HEK293 (cell line): ENCODE measurements at regions of chr6 and their contacts with region 1.

Region 1: GRCh38 chr6:154868143-154868594 is 126.9 kb upstream of the TIAM2 start:
- H3K4me3 ChIP-seq: no peak overlapping the region
- H3K27ac ChIP-seq: no peak overlapping the region
- H3K4me1 ChIP-seq: no peaks in the 10 kb centered on the region
- CTCF ChIP-seq: no peak

Region 2: DNA sequence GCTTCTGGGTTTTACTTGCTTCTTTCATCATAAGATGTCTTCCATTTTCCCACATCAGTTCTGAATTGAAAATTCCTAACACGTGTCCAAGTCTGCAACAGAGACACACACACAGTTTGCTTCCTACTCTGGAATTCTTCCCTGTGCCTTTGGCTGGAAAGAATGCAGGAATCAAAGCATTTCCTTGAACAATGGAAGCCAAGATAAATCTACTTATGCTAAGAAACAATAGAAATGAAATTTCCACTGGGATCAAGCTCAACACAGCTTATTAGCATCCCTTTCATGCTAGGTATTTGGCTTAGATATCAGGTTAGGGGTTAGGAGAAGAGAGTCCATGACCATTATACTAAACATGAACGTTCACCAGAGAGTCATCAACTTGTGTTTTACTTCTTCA is 236.1 kb before region 1 on chr6:
- CTCF ChIA-PET with region 1: no interaction called
- POLR2A ChIA-PET with region 1: no interaction called
- H3K4me3 ChIP-seq: no peak overlapping the region
- H3K27ac ChIP-seq: no peak overlapping the region
- H3K4me1 ChIP-seq: no peaks in the 10 kb centered on the region
- CTCF ChIP-seq: no peak

Region 3: DNA sequence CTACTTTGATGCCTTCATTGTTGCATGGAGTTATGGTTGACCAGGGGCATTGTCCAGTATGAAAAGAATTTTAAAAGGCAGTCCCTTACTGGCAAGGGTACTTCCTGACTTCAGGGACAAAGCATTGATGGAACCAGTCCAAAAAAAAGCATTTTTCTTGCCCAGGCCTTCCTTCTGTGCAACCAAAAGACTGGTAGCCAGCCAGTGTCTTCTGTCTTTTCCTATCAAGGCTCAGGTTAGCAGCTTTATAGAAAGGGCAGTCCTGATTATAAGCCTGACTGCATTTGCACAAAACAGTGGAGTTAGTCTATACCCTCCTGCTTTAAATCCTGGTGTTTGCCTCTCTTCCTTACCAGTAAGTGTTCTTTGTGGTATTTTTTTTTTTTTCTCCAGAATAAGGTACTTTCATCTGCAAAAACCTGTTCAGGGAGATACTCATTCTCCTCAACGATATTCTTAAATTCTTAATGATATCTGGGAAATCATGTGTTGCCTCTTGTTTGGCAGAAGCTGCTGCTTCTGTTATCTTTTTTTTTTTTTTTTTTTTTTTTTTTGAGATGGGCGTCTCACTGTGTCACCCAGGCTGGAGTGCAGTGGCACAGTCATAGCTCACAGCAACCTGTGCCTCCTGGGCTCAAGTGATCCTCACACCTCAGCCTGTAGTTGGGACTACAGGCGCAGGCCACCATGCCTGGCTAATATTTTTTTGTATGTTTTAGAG is 101.0 kb before region 1 on chr6:
- CTCF ChIA-PET with region 1: interaction called, 11 read pairs
- POLR2A ChIA-PET with region 1: no interaction called
- H3K4me3 ChIP-seq: no peak overlapping the region
- H3K27ac ChIP-seq: no peak overlapping the region
- H3K4me1 ChIP-seq: peaks cover 9% of the 10 kb centered on the region
- CTCF ChIP-seq: no peak

Region 4: GRCh38 chr6:154842833-154843232 is 25.3 kb before region 1 on chr6:
- CTCF ChIA-PET with region 1: interaction called, 24 read pairs
- POLR2A ChIA-PET with region 1: no interaction called
- H3K4me3 ChIP-seq: no peak overlapping the region
- H3K27ac ChIP-seq: no peak overlapping the region
- H3K4me1 ChIP-seq: peaks cover 13% of the 10 kb centered on the region
- CTCF ChIP-seq: no peak

Region 5: GRCh38 chr6:154848580-154848979 is 19.6 kb before region 1 on chr6:
- CTCF ChIA-PET with region 1: interaction called, 24 read pairs
- POLR2A ChIA-PET with region 1: no interaction called
- H3K4me3 ChIP-seq: no peak overlapping the region
- H3K27ac ChIP-seq: no peak overlapping the region
- H3K4me1 ChIP-seq: peaks cover 29% of the 10 kb centered on the region
- CTCF ChIP-seq: no peak

Region 6: GRCh38 chr6:154857529-154857928 is 10.6 kb before region 1 on chr6:
- CTCF ChIA-PET with region 1: interaction called, 15 read pairs
- POLR2A ChIA-PET with region 1: no interaction called
- H3K4me3 ChIP-seq: no peak overlapping the region
- H3K27ac ChIP-seq: no peak overlapping the region
- H3K4me1 ChIP-seq: peaks cover 11% of the 10 kb centered on the region
- CTCF ChIP-seq: no peak

Region 7: DNA sequence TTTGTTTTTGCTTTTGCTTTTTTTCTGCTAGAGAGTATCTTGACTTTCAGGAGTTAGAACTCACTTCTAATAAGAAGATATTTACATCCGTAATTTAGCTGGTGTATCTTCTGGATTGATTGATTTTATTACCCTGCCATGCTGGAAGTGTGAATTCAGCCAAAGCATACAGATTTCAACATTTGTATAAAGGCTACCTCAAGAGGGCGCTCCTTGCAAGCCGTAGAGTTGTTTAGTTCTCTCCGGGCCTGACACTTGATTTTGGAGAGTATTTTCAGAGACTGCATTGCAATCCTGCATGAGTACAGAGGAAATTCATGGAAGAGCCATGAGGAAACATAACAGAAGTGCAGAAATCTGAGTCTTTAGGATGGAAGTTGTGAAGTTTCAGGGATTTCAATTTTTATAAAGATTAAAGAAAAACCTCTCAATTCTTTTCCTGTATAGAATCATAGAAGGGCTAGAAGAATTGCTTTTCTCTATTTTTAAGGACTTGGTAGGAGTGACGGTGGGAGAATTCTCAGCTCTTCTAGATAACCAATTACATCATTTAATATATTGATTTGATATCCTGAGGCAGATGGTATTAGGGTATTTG is 60.3 kb after region 1 on chr6:
- CTCF ChIA-PET with region 1: interaction called, 45 read pairs
- POLR2A ChIA-PET with region 1: no interaction called
- H3K4me3 ChIP-seq: no peak overlapping the region
- H3K27ac ChIP-seq: no peak overlapping the region
- H3K4me1 ChIP-seq: peaks cover 6% of the 10 kb centered on the region; the same call in 1 of the 2 replicates
- CTCF ChIP-seq: peak; percentile 60

Region 8: GRCh38 chr6:155174576-155175211 is 306.5 kb after region 1 on chr6:
- CTCF ChIA-PET with region 1: interaction called, 31 read pairs
- POLR2A ChIA-PET with region 1: no interaction called
- H3K4me3 ChIP-seq: no peak overlapping the region
- H3K27ac ChIP-seq: no peak overlapping the region
- H3K4me1 ChIP-seq: peaks cover 13% of the 10 kb centered on the region
- CTCF ChIP-seq: peak; percentile 62; the same call in 1 of the 2 replicates